ENCODE measurements at regions of chr18 and their contacts with region 1.

Region 1: DNA sequence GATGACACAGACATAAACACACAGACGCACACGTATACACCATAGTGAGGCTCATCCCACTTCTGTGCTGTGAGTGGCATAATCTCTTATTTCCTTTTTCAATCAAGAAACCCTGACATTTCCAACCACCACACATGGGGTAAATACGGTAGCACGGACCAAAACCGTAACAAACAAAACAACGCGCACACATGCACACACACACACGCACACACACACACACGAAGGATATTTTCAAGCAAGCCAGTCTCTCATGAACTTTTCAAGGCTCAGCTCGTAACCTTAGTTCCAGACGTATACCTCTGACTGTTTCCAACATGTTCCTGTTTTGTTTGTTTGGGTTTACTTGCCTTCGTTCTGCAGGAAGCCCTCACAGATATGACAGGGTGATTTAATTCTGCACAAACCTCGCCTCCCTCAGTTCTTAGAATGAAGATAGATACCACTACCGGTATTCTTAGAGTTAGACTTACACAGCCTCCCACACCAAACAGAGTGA is 119.8 kb downstream of the BCL2 start:
- DNase-seq: peak; percentile 69
- ATAC-seq: peak; percentile 80
- H3K4me3 Mint-ChIP-seq: no peak overlapping the region
- H3K27ac Mint-ChIP-seq: no peak overlapping the region
- H3K4me1 Mint-ChIP-seq: peaks cover 47% of the 10 kb centered on the region
- H3K27me3 Mint-ChIP-seq: no peaks in the 10 kb centered on the region
- CTCF ChIP-seq: no peak

Region 2: DNA sequence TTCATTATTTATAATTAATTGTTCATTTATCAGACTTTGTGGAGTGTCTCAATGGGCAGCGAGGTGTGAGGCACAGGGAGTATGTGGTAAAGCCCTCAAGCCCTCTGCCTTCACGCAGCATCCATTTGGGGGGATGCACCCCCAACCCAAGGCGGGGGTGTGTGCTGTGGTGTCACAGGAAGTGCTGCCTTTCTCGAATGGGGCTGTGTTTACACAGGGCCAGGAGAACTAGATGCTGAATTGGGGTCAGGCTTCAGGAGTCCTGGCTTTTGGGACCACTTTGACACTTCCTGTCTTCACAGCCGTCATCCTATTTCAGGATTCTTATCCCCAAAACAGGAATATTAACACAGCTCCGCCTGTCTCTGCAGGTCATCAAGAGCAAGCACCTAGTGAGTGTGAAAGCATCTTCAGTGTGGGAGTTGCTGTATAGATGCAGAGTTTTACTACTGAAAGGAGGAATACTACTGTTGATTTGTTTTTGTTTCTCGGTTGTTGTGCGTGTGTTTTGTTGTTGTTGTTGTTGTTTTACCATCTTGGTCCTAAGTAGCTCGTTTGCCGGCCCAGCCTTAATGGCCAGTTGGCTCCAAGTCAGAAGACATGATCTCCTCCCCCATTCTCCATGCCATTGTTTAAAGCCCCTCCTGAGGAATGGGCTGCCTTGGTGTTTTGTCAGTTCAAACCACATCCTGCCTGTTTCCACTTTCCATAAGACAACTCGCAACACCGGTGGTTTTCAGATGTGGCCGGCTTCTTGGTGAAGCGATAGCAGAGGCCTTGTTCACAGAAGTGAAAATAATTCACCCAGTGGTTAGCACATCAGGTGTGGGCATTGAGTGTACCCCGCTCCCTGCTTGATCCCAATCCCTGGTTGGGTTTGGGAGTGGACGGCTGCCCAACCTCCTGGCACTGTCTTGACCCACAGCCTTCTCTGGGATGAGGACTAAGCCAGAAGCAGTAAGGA is 101.5 kb before region 1 on chr18:
- CTCF ChIA-PET with region 1: no interaction called
- POLR2A ChIA-PET with region 1: no interaction called
- intact Hi-C with region 1: no loop called
- DNase-seq: peak; percentile 84
- ATAC-seq: peak; percentile 80
- H3K4me3 Mint-ChIP-seq: peak overlapping the region; percentile 13
- H3K27ac Mint-ChIP-seq: peak overlapping the region; percentile 74
- H3K4me1 Mint-ChIP-seq: peaks cover 41% of the 10 kb centered on the region
- H3K27me3 Mint-ChIP-seq: peaks cover 2% of the 10 kb centered on the region
- CTCF ChIP-seq: no peak

Region 3: DNA sequence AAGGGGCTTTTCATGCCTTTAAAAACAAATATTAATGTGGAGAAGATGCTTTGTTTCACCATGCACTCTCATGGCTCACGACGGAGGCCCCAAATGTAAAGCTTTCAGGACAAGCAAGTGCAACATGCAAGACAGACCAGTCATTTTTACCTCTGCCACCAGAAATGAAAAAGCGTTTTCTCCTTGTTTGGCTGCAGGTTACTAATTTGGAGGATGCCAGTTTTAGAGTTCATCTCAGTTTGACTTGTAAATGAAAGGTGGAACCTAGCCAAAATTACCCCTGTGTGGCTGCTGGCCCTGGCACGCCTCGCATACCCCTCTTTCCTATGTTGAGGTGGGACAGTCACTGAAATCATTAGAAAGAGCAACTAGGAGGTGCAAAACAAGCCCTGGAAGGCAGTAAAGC is 18.8 kb before region 1 on chr18:
- CTCF ChIA-PET with region 1: interaction called, 18 read pairs
- POLR2A ChIA-PET with region 1: interaction called, 11 read pairs
- intact Hi-C with region 1: no loop called
- DNase-seq: no peak
- ATAC-seq: peak; percentile 26
- H3K4me3 Mint-ChIP-seq: no peak overlapping the region
- H3K27ac Mint-ChIP-seq: peak overlapping the region; percentile 13
- H3K4me1 Mint-ChIP-seq: peaks cover 71% of the 10 kb centered on the region
- H3K27me3 Mint-ChIP-seq: no peaks in the 10 kb centered on the region
- CTCF ChIP-seq: no peak

Region 4: GRCh38 chr18:63186520-63187222 is 13.1 kb before region 1 on chr18:
- CTCF ChIA-PET with region 1: interaction called, 18 read pairs
- POLR2A ChIA-PET with region 1: interaction called, 11 read pairs
- intact Hi-C with region 1: no loop called
- DNase-seq: no peak
- ATAC-seq: peak; percentile 22
- H3K4me3 Mint-ChIP-seq: no peak overlapping the region
- H3K27ac Mint-ChIP-seq: peak overlapping the region; percentile 47
- H3K4me1 Mint-ChIP-seq: peaks cover 82% of the 10 kb centered on the region
- H3K27me3 Mint-ChIP-seq: no peaks in the 10 kb centered on the region
- CTCF ChIP-seq: no peak

Region 5: GRCh38 chr18:63216516-63217311 is 16.9 kb after region 1 on chr18:
- CTCF ChIA-PET with region 1: interaction called, 8 read pairs
- POLR2A ChIA-PET with region 1: interaction called, 19 read pairs
- intact Hi-C with region 1: no loop called
- DNase-seq: peak; percentile 65
- ATAC-seq: peak; percentile 31
- H3K4me3 Mint-ChIP-seq: peak overlapping the region; percentile 53
- H3K27ac Mint-ChIP-seq: peak overlapping the region; percentile 92
- H3K4me1 Mint-ChIP-seq: peaks cover 94% of the 10 kb centered on the region
- H3K27me3 Mint-ChIP-seq: no peaks in the 10 kb centered on the region
- CTCF ChIP-seq: no peak

Measured in activated CD8-positive, alpha-beta T cell treated with anti-CD3 and anti-CD28 coated beads for 36 hours (primary cell).